Sigmoid colon (tissue), 7 donors: ENCODE measurements at regions of chr4 and their contacts with region 1.

Region 1: DNA sequence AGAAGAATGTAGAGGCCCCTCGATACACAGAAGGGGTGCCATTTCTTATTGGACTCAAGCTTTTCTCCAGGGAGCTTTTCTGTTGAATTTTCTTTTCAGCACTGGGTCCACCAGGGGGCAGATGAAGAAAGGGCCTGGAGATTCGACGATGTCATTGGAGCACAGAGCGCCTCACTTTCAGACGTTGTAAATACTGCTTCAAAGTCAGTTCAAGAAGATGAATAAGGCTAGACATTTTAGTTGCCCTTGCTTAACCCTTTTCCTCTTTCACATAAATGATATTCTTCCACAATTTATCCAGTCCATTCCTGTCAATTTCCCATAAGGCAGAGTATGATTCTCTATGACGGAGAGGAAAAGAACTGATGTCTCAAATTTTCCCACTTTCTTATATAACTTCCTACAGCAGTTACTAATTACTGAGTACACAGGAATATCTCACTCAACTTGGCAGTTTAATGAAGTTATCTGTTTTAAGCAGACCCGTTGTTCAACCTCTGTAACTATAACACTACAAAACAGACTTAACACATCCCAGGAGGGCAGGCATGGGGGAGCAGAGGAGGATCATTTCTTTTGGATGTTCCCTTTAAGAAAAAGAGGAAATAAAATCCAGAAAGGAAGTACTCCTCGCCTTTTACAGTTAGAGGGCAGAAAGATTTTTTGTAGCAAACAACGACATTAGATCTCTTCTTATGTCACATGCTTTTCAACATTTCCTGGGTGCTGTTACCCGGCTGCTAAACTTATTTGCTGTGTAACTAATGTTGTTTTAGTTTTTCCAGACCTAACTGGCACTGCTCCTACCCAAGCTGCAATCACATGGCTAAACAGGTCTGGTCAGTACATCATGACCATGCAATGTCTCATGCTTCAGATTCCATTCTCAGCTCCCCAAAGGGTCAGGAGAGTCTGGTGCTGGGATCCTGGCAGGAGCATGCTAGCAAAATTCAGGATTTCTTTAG is 12.2 kb upstream of the CENPU start:
- DNase-seq: peak; percentile 89
- H3K4me3 ChIP-seq: peak overlapping the region in 3 of 4 donors; percentile 11 to 31 (median 14)
- H3K27ac ChIP-seq: peak overlapping the region; percentile 76 to 85 (median 80)
- H3K4me1 ChIP-seq: peaks cover 0 to 22% (median 19%) of the 10 kb centered on the region in 4 donors
- H3K27me3 ChIP-seq: no peaks in the 10 kb centered on the region
- CTCF ChIP-seq: peak; percentile 56 to 84 (median 80)
- EP300 ChIP-seq: peak in 2 of 4 donors; percentile 30 to 41
- POLR2A ChIP-seq: no peak

Region 2: DNA sequence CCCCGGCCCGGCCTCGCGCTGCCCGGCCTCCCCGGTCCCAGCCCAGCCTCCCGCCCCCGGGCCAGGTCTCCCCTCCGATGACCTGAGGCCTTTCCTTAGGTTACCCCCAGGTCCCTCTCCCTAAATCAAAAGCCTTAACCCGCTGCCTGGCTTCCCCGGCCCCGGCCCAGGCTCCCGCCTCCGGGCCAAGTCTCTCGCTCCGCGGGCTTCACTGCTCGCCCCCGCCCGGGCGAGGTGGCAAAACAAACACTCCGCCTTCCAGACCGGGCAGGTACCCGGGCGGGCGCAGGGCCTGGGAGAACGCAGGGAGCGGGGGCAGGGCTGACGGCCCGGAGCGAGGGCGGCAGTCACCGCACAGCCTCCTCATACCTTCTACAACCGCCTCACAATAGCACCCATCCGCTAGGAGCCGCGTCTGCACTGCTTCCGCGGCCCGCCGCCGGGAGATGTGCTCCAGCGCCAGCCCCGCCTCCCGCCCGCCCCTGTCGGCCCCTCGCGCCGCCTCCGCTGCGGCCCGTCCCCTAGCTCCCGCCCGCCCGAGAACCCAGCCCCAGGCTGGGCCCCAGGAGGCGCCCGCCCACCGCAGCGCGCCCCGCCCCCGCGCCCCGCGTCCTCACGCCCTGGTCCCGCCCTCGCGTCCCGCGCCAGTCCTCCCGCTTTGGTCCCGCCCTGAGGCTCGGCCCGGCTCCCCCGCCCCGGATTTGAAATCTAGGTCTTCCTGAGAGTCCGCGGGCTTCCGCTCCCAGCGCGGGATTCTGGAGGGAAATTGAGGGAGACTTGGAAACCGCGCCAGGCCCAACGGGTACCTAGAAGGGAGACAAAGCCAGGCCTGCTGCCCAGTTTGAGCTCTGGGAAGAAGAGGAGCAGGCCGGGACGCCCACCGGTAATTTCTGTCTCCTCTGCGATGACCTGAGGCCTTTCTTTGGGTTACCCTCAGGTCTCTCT is 96.8 kb before region 1 on chr4 and contains the starts of genes CASP3 and PRIMPOL:
- intact Hi-C with region 1: loop called (anchors 5 kb)
- DNase-seq: peak; percentile 98
- H3K4me3 ChIP-seq: peak within 1 kb of the TSS; percentile 78 to 87 (median 86)
- H3K27ac ChIP-seq: peak within 1 kb of the TSS; percentile 94 to 100 (median 97)
- H3K4me1 ChIP-seq: peaks cover 0 to 49% (median 34%) of the 10 kb centered on the region in 4 donors
- H3K27me3 ChIP-seq: no peaks in the 10 kb centered on the region
- CTCF ChIP-seq: peak in 1 of 4 experiments; percentile 17
- EP300 ChIP-seq: no peak
- POLR2A ChIP-seq: peak; percentile 82 to 83
- total RNA-seq, gene CASP3: 9.4 to 20.3 (median 17.7) TPM
- total RNA-seq, gene PRIMPOL: 18.7 to 32.1 (median 29.9) TPM

Region 3: DNA sequence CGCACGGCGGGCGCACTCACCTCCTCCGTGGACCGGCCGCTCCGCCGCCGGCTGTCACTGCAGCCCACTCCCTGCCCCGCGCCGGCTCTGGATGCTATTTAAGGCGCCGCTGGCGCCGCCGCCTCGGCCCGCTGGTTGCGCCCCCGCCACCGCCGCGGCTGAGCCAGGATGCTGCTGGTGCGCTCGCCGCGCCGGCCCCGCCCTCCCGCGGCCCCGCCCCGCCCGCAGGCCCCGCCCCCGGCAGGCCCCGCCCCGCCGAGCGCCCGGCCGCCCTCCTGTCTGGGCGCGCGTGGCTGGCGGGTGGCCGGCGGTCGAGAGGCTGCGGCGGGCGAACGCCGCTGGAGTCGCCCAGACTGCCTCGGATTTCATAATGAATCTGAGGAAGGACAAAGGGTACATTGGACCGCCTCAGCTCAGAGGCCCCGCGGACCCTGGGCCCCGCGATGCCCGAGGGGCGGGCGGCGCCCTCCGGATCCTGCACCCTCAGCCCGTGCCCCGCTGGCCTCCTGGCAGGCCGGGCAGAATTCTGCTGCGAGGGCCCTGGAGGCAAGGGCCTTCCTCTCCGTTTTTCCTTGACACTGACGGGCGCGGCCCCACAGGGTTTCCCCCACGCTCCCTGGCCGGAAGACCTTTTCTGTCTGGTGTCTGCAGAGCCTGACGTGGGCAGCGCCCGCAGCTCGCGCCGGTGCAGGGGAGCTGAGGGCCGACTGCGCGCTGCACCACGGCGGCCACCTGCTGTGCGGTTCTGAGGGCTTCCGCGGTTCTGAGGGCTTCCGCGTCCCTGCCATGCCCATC is 80.0 kb after region 1 on chr4 and contains the start of gene ACSL1:
- intact Hi-C with region 1: loop called (anchors 5 kb)
- DNase-seq: peak; percentile 90
- H3K4me3 ChIP-seq: peak within 1 kb of the TSS; percentile 46 to 88 (median 65)
- H3K27ac ChIP-seq: peak within 1 kb of the TSS; percentile 80 to 91 (median 84)
- H3K4me1 ChIP-seq: peaks cover 0 to 22% (median 10%) of the 10 kb centered on the region in 4 donors
- H3K27me3 ChIP-seq: no peaks in the 10 kb centered on the region
- CTCF ChIP-seq: no peak
- EP300 ChIP-seq: no peak
- POLR2A ChIP-seq: no peak
- total RNA-seq, gene ACSL1: 37.8 to 118 (median 72.3) TPM

Region 4: DNA sequence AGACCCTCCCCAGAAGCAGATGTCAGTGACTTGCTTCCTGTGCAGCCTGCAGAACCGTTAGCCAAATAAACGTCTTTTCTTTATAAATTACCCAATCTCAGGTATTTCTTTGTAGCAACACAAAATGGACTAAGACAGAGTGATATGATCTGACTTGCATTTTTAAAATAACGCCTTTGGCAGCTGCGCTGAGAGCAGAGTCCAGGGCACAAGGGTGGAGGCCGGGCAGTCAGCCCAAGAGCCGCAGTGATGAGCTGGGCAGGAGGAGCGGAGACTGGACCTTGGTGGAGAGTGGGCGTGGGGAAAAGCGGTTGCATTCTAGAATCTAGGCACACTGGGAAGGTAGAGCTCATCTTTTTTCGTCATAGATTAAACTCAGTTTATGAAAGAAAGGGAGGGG is 136.2 kb after region 1 on chr4:
- intact Hi-C with region 1: no loop called
- DNase-seq: no peak
- H3K4me3 ChIP-seq: no peak overlapping the region
- H3K27ac ChIP-seq: no peak overlapping the region
- H3K4me1 ChIP-seq: no peaks in the 10 kb centered on the region
- H3K27me3 ChIP-seq: no peaks in the 10 kb centered on the region
- CTCF ChIP-seq: no peak
- EP300 ChIP-seq: no peak
- POLR2A ChIP-seq: no peak

Region 5: DNA sequence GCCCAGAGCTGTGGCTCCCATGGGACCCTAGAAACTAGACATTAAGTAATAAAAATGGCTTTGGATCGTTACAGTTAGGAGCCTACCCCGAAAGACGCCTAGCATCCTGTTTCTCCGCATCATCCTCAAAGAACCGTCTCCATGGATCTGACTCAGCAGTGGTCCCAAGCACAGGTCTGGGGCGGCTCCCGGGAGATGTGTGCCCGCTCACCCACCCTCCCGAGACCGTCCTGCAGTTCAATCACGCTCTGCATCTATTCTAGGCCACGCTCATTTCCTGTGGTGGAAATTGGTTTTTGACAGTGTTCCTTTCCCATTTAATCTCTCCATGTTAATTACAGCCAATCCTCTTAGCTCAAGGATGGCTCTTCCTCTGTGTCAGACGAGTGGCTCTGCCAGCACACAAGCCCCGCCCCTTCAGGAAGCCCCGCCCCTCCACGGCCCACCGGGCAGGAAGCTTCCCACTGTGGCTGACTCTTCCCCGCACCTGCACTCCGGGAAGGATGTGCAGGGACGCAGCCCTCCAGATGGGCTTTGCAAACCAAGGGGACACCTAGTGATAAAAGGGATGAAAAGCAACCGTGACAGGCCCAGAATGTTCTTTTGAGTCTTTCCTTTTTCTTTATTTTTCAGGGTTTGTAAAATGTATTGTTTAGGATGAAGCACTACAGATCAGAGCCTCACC is 237.7 kb after region 1 on chr4:
- intact Hi-C with region 1: loop called (anchors 2 kb)
- DNase-seq: no peak
- H3K4me3 ChIP-seq: no peak overlapping the region
- H3K27ac ChIP-seq: no peak overlapping the region
- H3K4me1 ChIP-seq: no peaks in the 10 kb centered on the region
- H3K27me3 ChIP-seq: peaks cover 0 to 9% (median 0%) of the 10 kb centered on the region in 3 donors
- CTCF ChIP-seq: peak in 2 of 4 experiments; percentile 21 to 34
- EP300 ChIP-seq: no peak
- POLR2A ChIP-seq: no peak

Region 6: GRCh38 chr4:185004562-185005215 is 258.6 kb after region 1 on chr4:
- intact Hi-C with region 1: loop called (anchors 5 kb)
- DNase-seq: peak; percentile 73
- H3K4me3 ChIP-seq: peak overlapping the region in 3 of 4 donors; percentile 15 to 31 (median 27)
- H3K27ac ChIP-seq: no peak overlapping the region
- H3K4me1 ChIP-seq: peaks cover 0 to 11% (median 8%) of the 10 kb centered on the region in 4 donors
- H3K27me3 ChIP-seq: peaks cover 0 to 5% (median 0%) of the 10 kb centered on the region in 3 donors
- CTCF ChIP-seq: no peak
- EP300 ChIP-seq: no peak
- POLR2A ChIP-seq: no peak

Region 7: GRCh38 chr4:185096032-185096653 is 350.0 kb after region 1 on chr4:
- intact Hi-C with region 1: loop called (anchors 10 kb)
- DNase-seq: no peak
- H3K4me3 ChIP-seq: no peak overlapping the region
- H3K27ac ChIP-seq: no peak overlapping the region
- H3K4me1 ChIP-seq: no peaks in the 10 kb centered on the region
- H3K27me3 ChIP-seq: peaks cover 0 to 10% (median 0%) of the 10 kb centered on the region in 3 donors
- CTCF ChIP-seq: peak in 3 of 4 experiments; percentile 37 to 47 (median 45)
- EP300 ChIP-seq: no peak
- POLR2A ChIP-seq: no peak

Region 8: DNA sequence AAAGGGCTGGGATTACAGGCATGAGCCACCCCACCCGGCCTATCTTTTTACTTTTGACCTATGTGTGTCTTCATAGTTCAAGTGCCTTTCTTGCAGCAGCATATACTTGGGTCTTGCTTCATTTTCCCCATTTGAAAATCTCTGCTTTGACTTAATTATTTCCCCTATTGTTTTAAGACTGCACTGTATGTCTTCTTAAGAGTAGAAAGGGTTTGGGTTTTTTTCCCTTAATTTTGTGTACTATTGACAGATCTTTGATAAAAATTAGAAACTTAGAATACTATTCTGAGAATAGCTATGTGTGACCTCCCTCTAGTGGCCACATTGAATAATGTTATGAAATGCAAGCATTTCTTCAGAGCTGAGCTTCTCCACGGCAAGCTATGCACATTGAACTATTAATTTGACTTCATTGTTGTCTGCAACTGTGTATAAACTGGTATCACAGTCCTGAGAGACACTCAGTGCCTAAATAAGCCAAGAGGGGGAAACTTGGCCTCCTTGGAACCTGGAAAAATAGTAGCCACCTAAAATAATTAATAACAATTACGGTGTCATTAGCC is 388.3 kb after region 1 on chr4:
- intact Hi-C with region 1: loop called (anchors 10 kb)
- DNase-seq: no peak
- H3K4me3 ChIP-seq: no peak overlapping the region
- H3K27ac ChIP-seq: no peak overlapping the region
- H3K4me1 ChIP-seq: no peaks in the 10 kb centered on the region
- H3K27me3 ChIP-seq: no peaks in the 10 kb centered on the region
- CTCF ChIP-seq: peak; percentile 53 to 71 (median 70)
- EP300 ChIP-seq: no peak
- POLR2A ChIP-seq: no peak

Region 9: GRCh38 chr4:185997296-185997695 is 1251.2 kb after region 1 on chr4:
- intact Hi-C with region 1: no loop called
- DNase-seq: no peak
- H3K4me3 ChIP-seq: no peak overlapping the region
- H3K27ac ChIP-seq: no peak overlapping the region
- H3K4me1 ChIP-seq: peaks cover 0 to 8% (median 0%) of the 10 kb centered on the region in 4 donors
- H3K27me3 ChIP-seq: no peaks in the 10 kb centered on the region
- CTCF ChIP-seq: no peak
- EP300 ChIP-seq: no peak
- POLR2A ChIP-seq: no peak